K562 (cell line): ENCODE measurements at regions of chr1 and their contacts with region 1.

Region 1: DNA sequence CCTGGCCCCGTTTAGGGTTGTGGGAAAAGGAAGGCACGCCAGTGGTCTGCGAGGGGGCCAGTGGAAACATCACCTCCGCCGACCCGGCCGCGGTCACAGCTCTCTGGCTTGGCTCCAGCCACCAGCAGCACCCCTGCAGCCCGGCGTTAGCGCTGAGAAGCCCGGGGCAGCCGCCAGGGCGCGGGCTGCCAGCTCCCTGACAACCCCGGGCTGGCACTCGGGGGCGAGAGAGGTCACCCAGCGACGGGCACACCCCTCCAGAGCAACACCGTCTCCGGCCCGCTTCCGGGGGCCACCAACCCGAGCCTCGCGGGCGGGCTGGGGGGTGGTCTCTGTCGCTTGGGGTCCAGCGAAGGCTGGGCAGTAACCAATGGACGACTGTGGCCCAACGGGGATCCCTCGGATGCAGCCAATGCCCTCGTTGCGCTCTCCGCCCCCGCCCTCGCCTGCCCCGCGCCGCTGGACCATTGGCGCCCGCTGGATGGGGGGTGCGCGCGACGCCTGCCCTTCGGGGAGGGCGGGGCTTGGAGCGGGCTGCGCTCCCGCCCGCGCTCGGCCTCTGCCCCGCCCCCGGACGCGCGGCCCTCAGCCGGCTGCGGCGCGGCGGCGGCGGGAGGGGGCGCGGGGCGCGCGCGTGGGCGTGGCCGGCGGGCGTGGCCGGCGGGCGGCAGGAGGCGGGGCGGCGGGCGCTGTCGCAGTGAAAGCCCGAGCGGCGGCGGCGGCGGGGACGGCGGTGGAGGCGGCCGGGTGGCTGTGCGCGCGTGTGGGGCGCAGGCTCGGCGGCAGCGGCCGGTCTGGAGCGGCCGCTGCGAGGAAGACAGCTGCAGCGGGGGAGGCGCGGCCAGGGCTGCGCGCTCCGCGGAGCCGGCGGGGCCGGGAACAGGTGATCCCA is at the start of gene MAN1C1:
- DNase-seq: peak; percentile 87 to 100 (median 99)
- ATAC-seq: peak; percentile 94
- H3K4me3 ChIP-seq: peak within 1 kb of the TSS; percentile 49
- H3K27ac ChIP-seq: no peak within 1 kb of the TSS
- H3K4me1 ChIP-seq: peaks cover 0 to 26% of the 10 kb centered on the region in 2 experiments; a peak in 2 of 5 replicates
- H3K27me3 ChIP-seq: peaks cover 44 to 75% of the 10 kb centered on the region in 2 experiments
- CTCF ChIP-seq: peak in 1 of 3 experiments; percentile 28; a peak in 2 of 6 replicates
- EP300 ChIP-seq: no peak
- POLR2A ChIP-seq: no peak
- RAD21 ChIP-seq: no peak
- polyA plus RNA-seq, gene MAN1C1: not detected

Region 2: DNA sequence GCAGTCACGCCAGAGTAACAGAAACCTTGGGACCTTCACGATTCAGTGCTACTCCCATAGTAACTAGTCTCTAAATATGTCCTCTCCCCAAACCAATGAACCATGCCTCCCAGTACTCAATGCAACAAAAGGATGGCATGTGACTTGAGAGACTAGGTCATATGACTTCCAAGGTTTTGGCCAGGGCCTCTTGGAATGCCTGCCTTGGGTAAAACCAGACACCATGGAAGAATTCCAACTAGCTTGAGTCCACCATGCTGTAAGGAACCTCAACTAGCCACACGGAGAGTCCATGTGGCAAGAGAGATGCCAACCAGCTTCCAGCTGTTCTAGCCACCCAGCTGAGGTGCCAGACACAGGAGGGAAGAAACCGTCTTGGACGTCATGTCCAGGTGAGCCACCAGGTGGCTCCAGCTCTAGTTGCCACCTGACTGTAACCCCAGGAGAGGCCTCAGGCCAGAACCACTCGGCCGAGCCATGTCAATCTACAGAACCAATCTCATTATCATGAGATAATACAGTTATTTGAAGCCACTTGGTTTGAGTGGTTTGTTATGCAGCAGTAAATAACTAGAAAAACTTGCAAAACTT is 499.0 kb before region 1 on chr1:
- CTCF ChIA-PET with region 1: no interaction called
- POLR2A ChIA-PET with region 1: no interaction called
- in situ Hi-C with region 1: no loop called
- intact Hi-C with region 1: no loop called
- DNase-seq: peak; percentile 57 to 64 (median 62)
- ATAC-seq: peak; percentile 93
- H3K4me3 ChIP-seq: no peak overlapping the region
- H3K27ac ChIP-seq: no peak overlapping the region
- H3K4me1 ChIP-seq: no peaks in the 10 kb centered on the region
- H3K27me3 ChIP-seq: peaks cover 15 to 28% of the 10 kb centered on the region in 2 experiments
- CTCF ChIP-seq: peak; percentile 58 to 72 (median 64)
- EP300 ChIP-seq: no peak
- POLR2A ChIP-seq: no peak
- RAD21 ChIP-seq: peak in 1 of 2 experiments; percentile 55; a peak in 2 of 4 replicates

Region 3: DNA sequence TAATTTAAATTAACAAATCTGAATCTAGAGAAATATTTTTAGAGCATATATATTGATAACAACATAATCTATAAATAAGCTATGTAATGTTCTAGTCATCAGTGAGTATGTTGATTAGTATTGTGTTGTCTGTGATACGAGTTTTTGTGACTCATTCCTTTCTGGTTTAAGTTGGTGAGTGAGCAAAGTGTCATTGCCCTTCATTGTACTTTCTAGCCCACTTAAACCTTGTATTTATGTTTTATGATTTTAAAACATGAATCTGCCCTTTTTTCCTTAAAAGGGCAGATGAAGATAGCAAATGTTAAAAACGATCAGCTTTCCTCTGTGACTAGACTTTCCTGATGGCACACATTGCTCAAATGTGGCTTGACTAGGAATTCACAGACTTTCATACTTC is 147.2 kb before region 1 on chr1:
- CTCF ChIA-PET with region 1: no interaction called
- POLR2A ChIA-PET with region 1: no interaction called
- in situ Hi-C with region 1: no loop called
- intact Hi-C with region 1: no loop called
- DNase-seq: no peak
- ATAC-seq: no peak
- H3K4me3 ChIP-seq: no peak overlapping the region
- H3K27ac ChIP-seq: no peak overlapping the region
- H3K4me1 ChIP-seq: peaks cover 7 to 19% of the 10 kb centered on the region in 2 experiments; a peak in 4 of 5 replicates
- H3K27me3 ChIP-seq: no peaks in the 10 kb centered on the region
- CTCF ChIP-seq: no peak
- EP300 ChIP-seq: no peak
- POLR2A ChIP-seq: no peak
- RAD21 ChIP-seq: no peak

Region 4: DNA sequence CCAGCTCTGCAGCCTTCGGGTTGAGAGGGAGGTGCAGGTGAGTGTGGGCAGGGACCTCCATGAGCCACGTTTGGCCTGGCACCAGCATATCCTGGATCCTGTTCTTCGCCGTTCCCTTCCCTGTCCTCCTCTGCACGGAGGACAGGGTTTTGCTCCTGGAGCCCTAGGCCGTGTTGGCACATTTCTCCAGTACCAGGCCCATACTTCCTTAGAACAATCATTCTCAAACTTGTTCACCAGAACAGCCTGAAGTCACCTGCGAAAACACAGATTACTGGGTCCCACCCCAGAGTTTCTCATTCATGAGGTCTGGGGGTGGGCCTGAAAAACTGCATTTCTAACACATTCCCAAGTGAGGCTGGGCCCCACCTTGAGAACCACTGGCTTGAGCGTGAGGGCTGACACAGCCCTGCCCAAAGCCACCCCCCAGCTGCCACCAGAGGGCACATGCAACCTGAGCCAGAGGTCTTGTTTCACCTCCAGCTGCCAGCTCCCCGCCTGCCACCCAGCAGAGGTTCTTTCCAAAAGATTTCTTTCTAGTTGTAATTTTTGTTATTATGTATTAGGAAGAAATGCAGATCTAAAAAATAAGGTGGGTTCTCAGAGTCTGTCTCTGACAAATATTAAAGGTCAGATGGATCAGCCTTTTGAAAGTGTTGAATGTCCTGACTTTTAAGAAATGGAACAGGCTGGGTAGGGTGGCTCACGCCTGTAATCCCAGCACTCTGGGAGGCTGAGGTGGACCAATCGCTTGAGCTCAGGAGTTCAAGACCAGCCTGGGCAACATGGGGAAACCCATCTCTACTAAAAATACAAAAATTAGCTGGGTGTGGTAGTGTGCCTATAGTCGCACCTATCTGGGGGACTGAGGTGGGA is 112.6 kb before region 1 on chr1:
- CTCF ChIA-PET with region 1: no interaction called
- POLR2A ChIA-PET with region 1: no interaction called
- in situ Hi-C with region 1: no loop called
- intact Hi-C with region 1: no loop called
- DNase-seq: peak in 1 of 4 experiments; percentile 37
- ATAC-seq: peak; percentile 67
- H3K4me3 ChIP-seq: no peak overlapping the region
- H3K27ac ChIP-seq: no peak overlapping the region
- H3K4me1 ChIP-seq: 0 out of 5 replicates have a peak, but pooled peaks cover 0 to 2% of the 10 kb centered on the region in 2 experiments
- H3K27me3 ChIP-seq: no peaks in the 10 kb centered on the region
- CTCF ChIP-seq: peak; percentile 43 to 54 (median 50)
- EP300 ChIP-seq: no peak
- POLR2A ChIP-seq: no peak
- RAD21 ChIP-seq: peak in 1 of 2 experiments; percentile 50; a peak in 2 of 4 replicates

Region 5: GRCh38 chr1:25541889-25542288 is 74.5 kb before region 1 on chr1:
- CTCF ChIA-PET with region 1: no interaction called
- POLR2A ChIA-PET with region 1: no interaction called
- in situ Hi-C with region 1: no loop called
- intact Hi-C with region 1: no loop called
- DNase-seq: no peak
- ATAC-seq: no peak
- H3K4me3 ChIP-seq: no peak overlapping the region
- H3K27ac ChIP-seq: no peak overlapping the region
- H3K4me1 ChIP-seq: peaks cover 24 to 31% of the 10 kb centered on the region in 2 experiments
- H3K27me3 ChIP-seq: no peaks in the 10 kb centered on the region
- CTCF ChIP-seq: no peak
- EP300 ChIP-seq: no peak
- POLR2A ChIP-seq: no peak
- RAD21 ChIP-seq: no peak

Region 6: DNA sequence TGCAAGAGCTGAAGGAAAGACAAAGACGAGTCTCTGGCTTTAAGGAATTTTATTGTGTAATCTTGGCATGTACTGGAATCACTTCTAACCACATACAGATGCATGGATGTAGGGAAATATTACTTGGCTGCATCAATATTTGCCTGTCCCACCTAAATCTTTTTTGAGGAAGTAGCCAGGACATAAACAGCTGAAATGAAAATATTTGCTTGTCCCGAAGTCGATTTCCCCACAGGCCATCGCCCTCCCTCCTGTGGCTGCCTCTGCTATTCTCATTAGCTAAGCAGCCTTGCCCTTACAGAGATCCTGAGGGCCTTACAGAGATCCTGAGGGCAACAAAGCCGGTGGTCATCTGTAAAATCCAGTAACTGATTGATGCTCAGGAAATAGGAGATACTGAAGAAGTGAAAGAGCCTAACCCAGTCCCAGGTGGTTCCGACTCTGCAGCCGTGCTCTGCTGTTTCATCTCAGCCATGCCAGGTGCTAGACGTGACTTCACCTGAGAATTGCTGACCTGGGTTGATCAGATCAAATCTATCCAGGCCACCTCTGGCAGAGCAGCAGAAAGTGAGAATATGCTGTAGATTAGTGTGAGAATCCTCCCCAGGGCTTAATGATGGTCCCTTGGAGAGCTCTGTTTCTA is 25.7 kb after region 1 on chr1:
- CTCF ChIA-PET with region 1: no interaction called
- POLR2A ChIA-PET with region 1: interaction called, 3 read pairs
- in situ Hi-C with region 1: no loop called
- intact Hi-C with region 1: loop called (anchors 2 kb)
- DNase-seq: no peak
- ATAC-seq: no peak
- H3K4me3 ChIP-seq: no peak overlapping the region
- H3K27ac ChIP-seq: no peak overlapping the region
- H3K4me1 ChIP-seq: 0 out of 5 replicates have a peak, but pooled peaks cover 0 to 2% of the 10 kb centered on the region in 2 experiments
- H3K27me3 ChIP-seq: peaks cover 39 to 49% of the 10 kb centered on the region in 2 experiments
- CTCF ChIP-seq: no peak
- EP300 ChIP-seq: no peak
- POLR2A ChIP-seq: no peak
- RAD21 ChIP-seq: no peak

Region 7: DNA sequence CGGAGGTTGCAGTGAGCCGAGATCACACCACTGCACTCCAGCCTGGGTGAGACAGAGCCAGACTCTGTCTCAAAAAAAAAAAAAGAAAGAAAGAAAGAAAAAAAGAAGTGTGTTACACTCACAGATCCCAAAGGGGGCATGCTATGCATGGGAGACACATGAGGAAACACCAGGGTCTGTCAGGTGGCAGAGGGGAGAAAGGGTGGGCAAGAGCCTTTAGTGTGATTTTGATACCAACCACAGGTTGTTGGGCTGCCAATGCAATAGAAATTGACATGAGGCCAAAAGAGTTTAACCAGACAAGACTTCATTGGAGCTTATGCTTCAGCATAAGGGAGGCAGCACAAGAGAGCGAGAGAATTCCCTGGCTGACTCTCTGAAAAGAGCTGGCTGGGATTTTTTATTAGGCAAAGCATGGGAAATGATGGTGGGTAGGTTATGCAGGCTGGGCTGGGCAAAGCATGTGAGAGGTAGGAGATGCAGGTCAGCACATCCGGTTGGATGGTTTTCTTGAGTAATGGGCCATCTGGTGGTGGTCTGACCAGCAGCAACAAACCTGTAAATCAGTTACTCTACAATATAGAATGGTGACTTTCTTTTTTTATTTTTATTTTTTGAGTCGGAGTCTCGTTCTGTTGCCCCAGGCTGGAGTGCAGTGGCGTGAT is 393.6 kb after region 1 on chr1:
- CTCF ChIA-PET with region 1: no interaction called
- POLR2A ChIA-PET with region 1: no interaction called
- in situ Hi-C with region 1: loop called (anchors 10 kb)
- intact Hi-C with region 1: no loop called
- DNase-seq: peak in 2 of 4 experiments; percentile 47 to 77
- ATAC-seq: peak; percentile 77
- H3K4me3 ChIP-seq: no peak overlapping the region
- H3K27ac ChIP-seq: no peak overlapping the region
- H3K4me1 ChIP-seq: peaks cover 19 to 23% of the 10 kb centered on the region in 2 experiments
- H3K27me3 ChIP-seq: no peaks in the 10 kb centered on the region
- CTCF ChIP-seq: peak; percentile 57 to 69 (median 59)
- EP300 ChIP-seq: no peak
- POLR2A ChIP-seq: no peak
- RAD21 ChIP-seq: peak in 1 of 2 experiments; percentile 77; a peak in 2 of 4 replicates